CD8-positive, alpha-beta T cell (primary cell): ENCODE measurements at regions of chr15 and their contacts with region 1.

Region 1: DNA sequence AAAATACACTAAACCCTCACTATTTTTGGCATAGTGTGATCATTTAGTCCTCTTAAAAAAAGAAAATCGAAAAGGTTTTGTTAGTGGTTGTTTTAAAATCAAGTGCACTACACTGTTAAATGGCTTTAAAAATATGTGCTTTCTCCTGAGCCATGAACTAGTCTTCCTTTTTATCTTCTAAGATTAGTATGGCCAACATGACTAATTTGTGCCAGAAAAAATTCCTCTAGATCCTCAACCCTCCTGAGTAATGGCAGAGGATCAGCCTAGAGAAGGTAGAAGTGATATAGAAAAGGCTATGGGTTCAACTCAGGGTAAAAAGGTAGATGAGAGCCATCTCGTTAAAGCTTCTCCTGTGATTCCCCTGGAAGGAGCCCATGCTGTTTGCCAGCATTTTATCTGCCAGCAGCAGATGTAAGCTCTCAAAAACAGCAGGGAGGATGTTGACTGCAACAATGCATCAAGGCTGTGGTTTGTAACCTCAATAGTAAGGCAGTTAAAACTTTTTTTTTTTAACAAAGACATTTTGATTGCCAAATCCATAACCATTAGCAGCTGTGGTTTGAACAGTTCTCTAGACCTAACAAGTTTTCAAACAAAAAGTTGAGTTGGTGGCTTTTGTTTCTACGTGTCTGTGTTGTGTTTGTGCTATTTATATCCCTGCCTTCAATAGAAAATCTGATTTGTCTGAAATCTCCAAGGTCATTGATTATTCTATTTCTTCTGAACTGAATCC is 30.2 kb upstream of the ZNF609 start:
- DNase-seq: peak; percentile 1 to 88 (median 43)
- ATAC-seq: peak; percentile 89
- H3K4me3 ChIP-seq: no peak overlapping the region
- H3K4me3 Mint-ChIP-seq: peak overlapping the region; percentile 57
- H3K27ac ChIP-seq: peak overlapping the region; percentile 49 to 65
- H3K27ac Mint-ChIP-seq: peak overlapping the region; percentile 92
- H3K4me1 ChIP-seq: peaks cover 52% of the 10 kb centered on the region
- H3K4me1 Mint-ChIP-seq: peaks cover 44% of the 10 kb centered on the region
- H3K27me3 ChIP-seq: no peaks in the 10 kb centered on the region
- H3K27me3 Mint-ChIP-seq: no peaks in the 10 kb centered on the region
- CTCF ChIP-seq: no peak

Region 2: DNA sequence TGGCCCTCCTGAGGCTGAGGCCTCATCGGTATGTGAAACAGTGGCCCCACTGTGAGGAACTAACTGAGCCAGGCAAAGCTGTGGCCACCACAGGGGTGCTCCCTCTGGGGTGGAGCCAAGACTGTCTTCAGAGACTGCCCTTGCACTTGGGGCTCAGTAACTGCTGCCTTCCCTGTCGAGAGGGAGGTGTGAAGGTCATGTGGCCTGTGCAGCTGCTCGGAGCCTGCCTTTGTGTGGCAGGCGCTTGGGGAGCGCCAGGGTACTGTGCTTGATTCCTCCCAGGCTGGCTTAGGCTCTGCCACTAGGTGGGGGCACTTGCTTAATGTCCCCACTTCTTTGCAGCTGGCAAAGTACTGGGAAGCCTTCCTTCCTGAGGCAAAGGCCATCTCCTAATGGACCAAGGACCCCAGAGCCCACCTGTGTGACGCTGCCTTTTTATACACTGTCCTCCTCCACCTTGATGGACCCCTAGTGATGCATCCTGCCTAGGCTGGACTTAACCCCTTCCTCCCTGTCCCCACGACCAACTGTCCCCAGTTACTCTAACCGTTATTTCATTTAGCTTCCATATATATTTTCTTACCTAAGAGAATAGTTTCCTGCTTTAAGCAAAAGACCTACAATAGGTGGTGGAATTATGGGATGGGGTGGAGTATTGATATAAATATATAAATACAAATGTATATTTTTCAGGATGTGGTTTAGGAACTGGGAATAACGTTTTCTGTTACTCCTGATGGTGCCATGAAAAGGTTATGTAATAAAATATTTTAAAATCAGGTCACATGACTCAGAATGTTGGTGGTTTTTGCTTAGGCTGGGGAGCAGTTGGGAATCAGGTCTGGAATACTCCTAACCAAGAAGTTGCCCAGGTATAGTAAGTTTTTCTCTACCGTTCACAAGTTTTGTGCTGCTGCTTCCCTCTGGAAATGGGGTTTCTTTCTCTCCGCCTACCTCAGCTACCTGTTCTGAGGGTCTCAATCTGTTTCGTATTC is 292.6 kb before region 1 on chr15:
- CTCF ChIA-PET with region 1: no interaction called
- POLR2A ChIA-PET with region 1: no interaction called
- intact Hi-C with region 1: no loop called
- DNase-seq: peak in 1 of 9 experiments; percentile 32
- ATAC-seq: peak; percentile 42
- H3K4me3 ChIP-seq: no peak overlapping the region
- H3K4me3 Mint-ChIP-seq: no peak overlapping the region
- H3K27ac ChIP-seq: no peak overlapping the region
- H3K27ac Mint-ChIP-seq: no peak overlapping the region
- H3K4me1 ChIP-seq: no peaks in the 10 kb centered on the region
- H3K4me1 Mint-ChIP-seq: no peaks in the 10 kb centered on the region
- H3K27me3 ChIP-seq: no peaks in the 10 kb centered on the region
- H3K27me3 Mint-ChIP-seq: no peaks in the 10 kb centered on the region
- CTCF ChIP-seq: no peak

Region 3: GRCh38 chr15:64443747-64444621 is 13.8 kb after region 1 on chr15:
- CTCF ChIA-PET with region 1: interaction called, 5 read pairs
- POLR2A ChIA-PET with region 1: interaction called, 4 read pairs
- intact Hi-C with region 1: loop called in 1 of 2 experiments (anchors 1 kb)
- DNase-seq: peak in 1 of 9 experiments; percentile 36
- ATAC-seq: peak; percentile 38
- H3K4me3 ChIP-seq: no peak overlapping the region
- H3K4me3 Mint-ChIP-seq: peak overlapping the region; percentile 45
- H3K27ac ChIP-seq: no peak overlapping the region
- H3K27ac Mint-ChIP-seq: peak overlapping the region; percentile 84
- H3K4me1 ChIP-seq: peaks cover 38% of the 10 kb centered on the region
- H3K4me1 Mint-ChIP-seq: peaks cover 49% of the 10 kb centered on the region
- H3K27me3 ChIP-seq: no peaks in the 10 kb centered on the region
- H3K27me3 Mint-ChIP-seq: no peaks in the 10 kb centered on the region
- CTCF ChIP-seq: no peak